ENCODE measurements at regions of chr9 and their contacts with region 1.

Region 1: DNA sequence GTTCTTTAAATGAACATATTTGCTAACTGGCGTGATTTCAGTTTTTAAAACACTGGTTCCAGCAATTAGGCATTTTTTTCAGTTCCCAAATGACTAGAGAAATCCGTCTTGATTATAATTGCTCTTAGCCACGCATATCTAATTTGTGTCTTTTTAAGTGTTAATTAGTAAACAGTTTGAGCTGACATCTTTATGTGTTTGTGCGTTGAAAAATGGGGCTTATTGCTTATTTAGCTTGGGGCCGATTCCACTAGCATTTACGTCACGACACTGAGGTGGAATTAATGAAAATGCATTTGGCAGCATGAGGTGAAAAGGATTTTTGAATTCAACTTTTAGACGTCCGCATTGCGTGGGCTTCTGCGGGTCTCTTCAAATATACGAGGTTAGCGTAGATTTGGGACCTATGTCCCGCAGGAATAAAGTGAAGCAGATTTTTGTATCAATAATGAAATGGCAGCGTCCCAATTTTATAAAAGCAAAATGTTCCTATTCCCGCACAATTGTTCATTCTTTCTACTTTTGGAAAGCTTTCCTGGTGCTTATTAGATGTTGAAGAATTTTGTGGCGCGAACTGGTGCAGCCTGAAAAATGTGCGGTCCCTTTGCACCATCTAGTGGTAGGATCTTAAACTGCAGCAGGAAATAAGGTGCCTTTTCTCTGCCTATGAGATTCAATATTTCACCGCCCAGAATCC is 122.7 kb upstream of the LMX1B start:
- DNase-seq: peak; percentile 66
- ATAC-seq: peak; percentile 70
- H3K4me3 Mint-ChIP-seq: no peak overlapping the region
- H3K27ac Mint-ChIP-seq: no peak overlapping the region
- H3K4me1 Mint-ChIP-seq: peaks cover 11% of the 10 kb centered on the region
- H3K27me3 Mint-ChIP-seq: no peaks in the 10 kb centered on the region
- CTCF ChIP-seq: peak; percentile 97

Region 2: GRCh38 chr9:126203126-126203712 is 287.8 kb before region 1 on chr9:
- CTCF ChIA-PET with region 1: no interaction called
- POLR2A ChIA-PET with region 1: no interaction called
- intact Hi-C with region 1: no loop called
- DNase-seq: peak; percentile 10
- ATAC-seq: no peak
- H3K4me3 Mint-ChIP-seq: no peak overlapping the region
- H3K27ac Mint-ChIP-seq: no peak overlapping the region
- H3K4me1 Mint-ChIP-seq: no peaks in the 10 kb centered on the region
- H3K27me3 Mint-ChIP-seq: peaks cover 41% of the 10 kb centered on the region
- CTCF ChIP-seq: no peak

Region 3: GRCh38 chr9:126228781-126229444 is 262.1 kb before region 1 on chr9:
- CTCF ChIA-PET with region 1: interaction called, 14 read pairs
- POLR2A ChIA-PET with region 1: no interaction called
- intact Hi-C with region 1: no loop called
- DNase-seq: peak; percentile 79
- ATAC-seq: peak; percentile 99
- H3K4me3 Mint-ChIP-seq: no peak overlapping the region
- H3K27ac Mint-ChIP-seq: no peak overlapping the region
- H3K4me1 Mint-ChIP-seq: peaks cover 4% of the 10 kb centered on the region
- H3K27me3 Mint-ChIP-seq: peaks cover 25% of the 10 kb centered on the region
- CTCF ChIP-seq: peak; percentile 93

Region 4: DNA sequence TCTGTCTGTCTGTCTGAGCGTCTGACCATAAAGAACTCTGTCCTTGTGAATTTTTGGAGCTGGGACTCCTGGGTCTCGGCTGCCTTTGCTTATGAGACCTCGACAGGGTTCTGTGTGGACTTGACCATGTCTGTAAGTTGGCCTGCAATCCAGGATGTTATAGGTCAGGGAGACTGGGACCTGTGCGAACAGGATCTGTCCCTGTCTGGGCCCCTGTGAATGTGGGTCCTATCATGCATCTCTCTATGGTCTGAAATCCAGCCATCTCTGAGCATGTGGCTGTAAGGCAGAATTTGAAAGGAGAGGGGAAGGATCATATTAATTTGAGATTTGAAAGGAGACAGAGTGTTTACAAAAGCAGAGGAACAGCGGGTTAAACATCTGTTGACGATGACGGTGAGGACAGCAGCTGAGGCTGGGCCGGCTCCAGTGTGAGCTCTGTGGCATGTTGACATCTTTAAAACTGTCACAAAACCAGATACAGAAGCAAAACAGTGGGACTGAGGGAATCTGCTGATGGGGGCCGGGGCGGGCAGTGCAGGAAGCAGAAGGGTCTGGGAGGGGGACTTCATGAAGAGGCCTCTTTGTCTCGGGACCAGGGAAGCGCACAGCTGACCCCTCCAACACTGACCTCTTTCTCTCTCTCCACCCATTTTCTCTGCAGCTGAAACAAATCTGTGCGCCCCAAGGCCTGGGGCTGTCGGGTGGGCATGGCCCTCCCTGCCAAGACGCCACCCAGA is 183.5 kb before region 1 on chr9:
- CTCF ChIA-PET with region 1: interaction called, 31 read pairs
- POLR2A ChIA-PET with region 1: no interaction called
- intact Hi-C with region 1: loop called (anchors 5 kb)
- DNase-seq: no peak
- ATAC-seq: no peak
- H3K4me3 Mint-ChIP-seq: no peak overlapping the region
- H3K27ac Mint-ChIP-seq: no peak overlapping the region
- H3K4me1 Mint-ChIP-seq: no peaks in the 10 kb centered on the region
- H3K27me3 Mint-ChIP-seq: no peaks in the 10 kb centered on the region
- CTCF ChIP-seq: no peak

Region 5: DNA sequence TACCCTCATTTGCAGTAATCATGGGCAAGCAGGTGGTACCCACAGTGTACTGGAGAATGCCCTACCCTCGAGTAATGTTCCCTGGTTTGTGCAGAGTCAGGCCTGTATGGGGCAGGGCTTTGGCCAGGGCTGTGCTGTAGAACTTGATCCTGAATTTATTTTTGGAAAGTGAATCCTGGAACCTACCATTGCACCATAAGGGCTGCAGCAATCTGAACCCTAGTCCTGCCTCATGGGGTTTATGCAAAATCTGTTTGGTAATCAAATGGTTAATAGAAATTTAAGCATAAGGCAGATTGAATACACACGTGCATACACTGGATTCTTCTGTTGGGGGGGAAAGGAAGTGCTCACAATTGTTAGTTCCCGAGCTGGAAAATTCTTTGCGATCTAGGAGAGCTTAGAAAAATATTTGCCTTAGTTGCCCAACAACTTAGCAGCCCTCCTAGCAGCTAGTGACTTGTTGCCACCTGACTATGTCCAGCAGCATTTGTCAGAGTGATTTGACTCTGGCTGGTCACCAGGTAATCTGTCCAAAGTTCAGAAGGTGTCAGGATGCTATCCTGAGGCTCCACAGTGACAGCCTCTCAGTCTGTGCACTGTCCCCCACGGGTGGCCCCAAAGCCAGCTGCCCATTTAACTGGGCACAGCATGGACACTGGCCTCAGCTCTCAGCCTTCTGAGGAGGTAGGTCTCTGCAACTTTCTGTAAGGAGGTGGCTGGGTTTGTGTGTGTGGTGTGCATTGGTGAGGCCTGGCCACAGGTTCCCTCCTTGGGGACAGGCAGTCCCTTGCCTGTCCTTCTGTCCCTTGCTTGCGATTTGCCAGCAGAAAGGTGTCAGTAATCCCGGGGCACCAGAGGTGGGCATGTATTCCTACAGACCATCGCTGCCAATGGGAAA is 156.0 kb before region 1 on chr9:
- CTCF ChIA-PET with region 1: interaction called, 12 read pairs
- POLR2A ChIA-PET with region 1: no interaction called
- intact Hi-C with region 1: no loop called
- DNase-seq: no peak
- ATAC-seq: no peak
- H3K4me3 Mint-ChIP-seq: no peak overlapping the region
- H3K27ac Mint-ChIP-seq: no peak overlapping the region
- H3K4me1 Mint-ChIP-seq: peaks cover 28% of the 10 kb centered on the region
- H3K27me3 Mint-ChIP-seq: no peaks in the 10 kb centered on the region
- CTCF ChIP-seq: no peak

Region 6: DNA sequence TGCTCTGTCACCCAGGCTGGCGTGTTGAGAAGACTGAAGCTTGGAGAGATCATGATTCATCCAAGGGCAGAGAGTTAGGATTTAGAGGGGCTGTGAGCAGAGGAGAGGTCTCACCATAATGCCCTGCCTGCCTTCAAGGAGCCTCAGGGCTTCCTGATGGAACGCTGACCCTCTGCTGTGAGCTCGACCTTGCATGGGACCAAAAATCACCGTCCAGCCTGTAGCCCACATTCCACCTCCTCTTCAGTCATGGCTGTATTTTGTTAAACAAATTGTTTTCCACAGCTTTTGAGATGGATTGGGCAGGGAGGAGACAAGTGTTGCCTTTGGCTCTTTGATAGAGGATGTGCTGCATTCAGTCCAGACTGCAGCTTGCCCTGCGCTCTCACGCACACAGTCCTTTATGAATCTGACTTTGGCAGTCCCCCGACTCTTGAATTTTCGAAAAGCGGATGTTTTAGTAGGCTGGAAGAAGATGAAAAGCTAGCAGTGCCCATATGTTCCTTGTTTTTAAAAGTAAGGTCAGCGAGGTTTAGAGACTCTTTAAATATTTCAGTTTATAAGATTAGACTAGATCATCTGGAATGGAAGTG is 84.8 kb before region 1 on chr9:
- CTCF ChIA-PET with region 1: interaction called, 17 read pairs
- POLR2A ChIA-PET with region 1: interaction called, 3 read pairs
- intact Hi-C with region 1: no loop called
- DNase-seq: no peak
- ATAC-seq: no peak
- H3K4me3 Mint-ChIP-seq: no peak overlapping the region
- H3K27ac Mint-ChIP-seq: no peak overlapping the region
- H3K4me1 Mint-ChIP-seq: peaks cover 35% of the 10 kb centered on the region
- H3K27me3 Mint-ChIP-seq: no peaks in the 10 kb centered on the region
- CTCF ChIP-seq: no peak

Region 7: GRCh38 chr9:126532019-126532462 is 41.0 kb after region 1 on chr9:
- CTCF ChIA-PET with region 1: no interaction called
- POLR2A ChIA-PET with region 1: no interaction called
- intact Hi-C with region 1: no loop called
- DNase-seq: no peak
- ATAC-seq: no peak
- H3K4me3 Mint-ChIP-seq: no peak overlapping the region
- H3K27ac Mint-ChIP-seq: no peak overlapping the region
- H3K4me1 Mint-ChIP-seq: no peaks in the 10 kb centered on the region
- H3K27me3 Mint-ChIP-seq: peaks cover 2% of the 10 kb centered on the region
- CTCF ChIP-seq: no peak

Region 8: DNA sequence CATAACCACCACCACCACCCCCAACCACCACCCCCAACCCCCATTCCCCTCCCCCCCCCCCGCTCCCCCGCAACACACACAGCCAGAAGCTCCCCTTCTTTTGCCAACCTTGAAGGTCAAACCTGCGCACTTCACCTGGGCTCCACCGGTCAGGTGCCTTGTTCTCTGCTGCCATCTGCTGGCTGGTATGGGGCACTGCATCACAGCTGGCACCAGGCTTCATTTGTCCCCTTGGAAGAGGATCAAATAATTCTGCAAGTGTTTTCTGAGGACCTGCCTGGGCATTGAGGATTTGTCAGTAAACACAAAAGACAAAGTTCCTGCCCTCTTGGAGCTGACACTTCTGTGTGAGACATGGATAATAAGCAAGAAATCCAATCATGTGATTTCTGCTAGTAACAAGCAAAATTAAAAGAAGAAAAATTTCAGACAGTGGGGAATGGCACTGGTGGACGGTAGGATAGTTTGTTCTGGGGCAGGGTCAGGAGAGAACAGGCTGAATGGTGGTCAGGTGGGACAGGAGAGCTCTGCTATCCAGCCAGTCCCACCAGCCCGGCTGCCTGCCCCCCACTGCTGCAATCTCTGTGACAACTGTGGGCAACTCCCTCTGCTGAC is 67.1 kb after region 1 on chr9:
- CTCF ChIA-PET with region 1: interaction called, 33 read pairs
- POLR2A ChIA-PET with region 1: no interaction called
- intact Hi-C with region 1: no loop called
- DNase-seq: peak; percentile 76
- ATAC-seq: peak; percentile 97
- H3K4me3 Mint-ChIP-seq: no peak overlapping the region
- H3K27ac Mint-ChIP-seq: no peak overlapping the region
- H3K4me1 Mint-ChIP-seq: no peaks in the 10 kb centered on the region
- H3K27me3 Mint-ChIP-seq: peaks cover 26% of the 10 kb centered on the region
- CTCF ChIP-seq: peak; percentile 87

Region 9: GRCh38 chr9:126690431-126691350 is 199.7 kb after region 1 on chr9:
- CTCF ChIA-PET with region 1: no interaction called
- POLR2A ChIA-PET with region 1: no interaction called
- intact Hi-C with region 1: no loop called
- DNase-seq: peak; percentile 75
- ATAC-seq: peak; percentile 92
- H3K4me3 Mint-ChIP-seq: no peak overlapping the region
- H3K27ac Mint-ChIP-seq: no peak overlapping the region
- H3K4me1 Mint-ChIP-seq: no peaks in the 10 kb centered on the region
- H3K27me3 Mint-ChIP-seq: peaks cover 21% of the 10 kb centered on the region
- CTCF ChIP-seq: peak; percentile 70

Measured in activated CD8-positive, alpha-beta T cell treated with anti-CD3 and anti-CD28 coated beads for 36 hours (primary cell).